Activated CD4-positive, alpha-beta T cell treated with anti-CD3 and anti-CD28 coated beads, Interleukin-2, amount 10 ng/mL, durations not matched to agents 7 days and 5 days (primary cell): ENCODE measurements at regions of chr6 and their contacts with region 1.

Region 1: DNA sequence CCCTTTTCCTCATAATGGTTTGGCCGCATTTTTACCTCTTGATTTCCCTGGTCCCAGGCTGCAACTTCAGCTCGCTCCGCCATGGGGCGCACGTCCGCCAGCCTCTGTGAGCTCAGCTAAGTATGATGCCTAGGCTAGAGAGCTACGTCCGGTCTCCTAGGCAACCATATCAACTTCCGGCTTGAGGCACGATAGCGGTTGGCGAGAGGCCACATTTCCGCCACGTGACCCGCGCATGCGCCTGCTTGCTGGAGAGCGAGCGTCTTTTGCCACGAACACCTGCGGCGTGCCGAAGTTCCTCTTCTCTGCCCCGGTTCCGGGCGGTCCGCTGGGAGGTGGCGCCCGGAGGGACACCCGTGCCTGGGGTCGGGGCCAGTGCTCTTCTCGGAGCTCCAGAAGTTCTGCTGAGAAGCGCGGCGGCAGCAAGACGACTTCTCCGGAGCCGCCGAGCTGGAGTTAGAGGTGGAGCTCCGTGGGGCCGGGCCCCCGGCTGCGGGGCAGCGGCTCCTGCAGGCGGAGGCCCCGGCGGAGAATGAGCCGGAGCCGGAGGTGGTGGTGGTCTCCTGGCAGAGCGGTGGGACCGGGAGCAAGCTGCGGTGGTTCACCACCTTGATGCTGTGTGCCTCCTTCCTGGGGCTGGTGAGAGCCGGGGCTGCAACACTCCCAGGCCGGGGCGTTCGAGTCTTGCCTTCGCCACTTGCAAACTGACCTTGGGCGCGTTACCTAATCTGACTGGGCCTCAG is 172.0 kb downstream of the SLC16A10 start:
- DNase-seq: peak; percentile 99
- H3K4me3 Mint-ChIP-seq: peak overlapping the region; percentile 68
- H3K27ac Mint-ChIP-seq: peak overlapping the region; percentile 87
- H3K4me1 Mint-ChIP-seq: peaks cover 33% of the 10 kb centered on the region
- H3K27me3 Mint-ChIP-seq: peaks cover 4% of the 10 kb centered on the region

Region 2: DNA sequence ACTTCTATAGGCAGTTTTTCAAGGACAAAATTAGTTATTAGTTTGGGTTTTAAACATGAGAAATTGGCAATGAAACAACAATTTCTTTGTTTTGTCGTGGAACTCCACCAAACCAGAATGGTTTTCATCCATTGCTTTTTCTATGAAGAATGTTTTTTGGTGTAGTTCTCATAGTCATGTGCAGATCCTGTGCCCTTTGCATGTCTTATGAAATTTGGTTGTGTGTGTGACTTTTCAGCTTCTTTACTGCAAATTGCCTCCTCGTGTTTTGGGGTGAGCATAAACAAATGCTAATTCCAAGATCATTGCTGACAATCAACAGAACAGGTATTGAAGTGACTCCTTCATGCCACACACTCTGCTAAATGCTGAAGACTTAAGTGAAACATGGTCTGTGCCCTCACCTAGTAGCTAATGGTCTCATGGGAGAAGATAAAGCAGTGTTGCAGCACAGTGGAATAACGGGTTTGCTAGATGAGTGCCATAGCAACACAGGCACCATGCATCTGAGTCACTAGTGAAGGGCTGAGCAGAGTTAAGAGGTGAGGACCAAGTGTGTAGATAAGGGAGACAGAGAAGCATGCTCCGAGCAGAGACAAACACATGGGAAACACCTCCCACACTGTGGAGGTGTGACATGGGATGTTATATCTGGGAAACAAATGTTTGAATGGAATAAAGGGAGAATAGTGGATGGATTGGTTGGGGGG is 52.0 kb before region 1 on chr6:
- CTCF ChIA-PET with region 1: no interaction called
- POLR2A ChIA-PET with region 1: no interaction called
- DNase-seq: no peak
- H3K4me3 Mint-ChIP-seq: no peak overlapping the region
- H3K27ac Mint-ChIP-seq: no peak overlapping the region
- H3K4me1 Mint-ChIP-seq: no peaks in the 10 kb centered on the region
- H3K27me3 Mint-ChIP-seq: no peaks in the 10 kb centered on the region

Region 3: DNA sequence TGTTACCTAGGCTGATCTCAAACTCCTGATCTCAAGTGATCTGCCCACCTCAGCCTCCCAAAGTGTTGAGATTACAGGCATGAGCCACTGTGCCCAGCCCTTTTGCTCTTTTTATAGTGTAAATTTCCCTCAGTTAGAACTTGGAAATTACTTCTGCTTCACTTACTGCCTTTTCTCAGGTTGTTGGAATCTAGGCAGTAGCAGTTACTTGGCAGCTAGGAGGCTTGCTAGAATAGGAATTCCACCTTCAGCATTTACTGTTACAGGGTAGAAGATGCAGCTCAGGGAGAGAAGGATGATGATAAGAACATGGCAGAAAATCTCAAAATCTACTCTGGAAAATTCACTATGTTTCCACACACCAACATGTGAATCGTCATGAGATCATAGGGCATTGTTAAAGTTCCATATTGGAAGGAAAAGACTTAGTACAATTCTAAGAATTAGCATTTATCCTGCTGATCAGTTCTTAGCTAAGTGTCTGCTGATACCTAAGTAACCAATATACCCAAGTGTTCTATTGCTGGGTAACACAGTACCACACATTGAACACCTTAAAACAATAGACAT is 10.2 kb after region 1 on chr6:
- CTCF ChIA-PET with region 1: interaction called, 17 read pairs
- POLR2A ChIA-PET with region 1: no interaction called
- DNase-seq: no peak
- H3K4me3 Mint-ChIP-seq: no peak overlapping the region
- H3K27ac Mint-ChIP-seq: no peak overlapping the region
- H3K4me1 Mint-ChIP-seq: peaks cover 6% of the 10 kb centered on the region
- H3K27me3 Mint-ChIP-seq: no peaks in the 10 kb centered on the region

Region 4: DNA sequence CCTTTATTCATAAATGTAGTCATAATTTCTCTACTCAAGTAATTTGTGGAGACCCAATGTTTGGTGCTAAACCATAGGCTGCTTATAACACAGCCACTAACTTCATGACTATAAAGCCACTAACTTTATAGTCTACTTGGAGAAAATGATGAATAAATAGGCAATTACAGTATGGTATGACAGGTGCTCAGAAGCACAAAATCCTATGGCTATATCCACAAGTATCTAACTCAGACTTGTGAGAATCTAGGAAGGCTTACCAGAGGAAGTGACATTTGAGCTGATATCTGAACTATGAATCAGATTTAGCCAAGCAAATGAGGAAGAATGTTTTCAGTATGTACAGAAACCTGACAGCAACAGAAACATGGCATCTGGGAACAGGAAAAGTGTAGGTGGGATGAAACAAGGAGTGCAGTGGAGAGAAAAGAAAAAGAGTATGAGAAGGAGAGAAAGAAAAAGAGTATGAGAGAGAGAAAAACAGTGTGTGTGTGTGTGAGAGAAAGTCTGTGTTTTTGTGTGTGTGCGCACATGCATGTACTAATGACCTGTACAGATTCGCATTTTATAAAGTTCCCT is 163.9 kb after region 1 on chr6:
- CTCF ChIA-PET with region 1: no interaction called
- POLR2A ChIA-PET with region 1: no interaction called
- DNase-seq: no peak
- H3K4me3 Mint-ChIP-seq: no peak overlapping the region
- H3K27ac Mint-ChIP-seq: no peak overlapping the region
- H3K4me1 Mint-ChIP-seq: peaks cover 24% of the 10 kb centered on the region
- H3K27me3 Mint-ChIP-seq: no peaks in the 10 kb centered on the region

Region 5: DNA sequence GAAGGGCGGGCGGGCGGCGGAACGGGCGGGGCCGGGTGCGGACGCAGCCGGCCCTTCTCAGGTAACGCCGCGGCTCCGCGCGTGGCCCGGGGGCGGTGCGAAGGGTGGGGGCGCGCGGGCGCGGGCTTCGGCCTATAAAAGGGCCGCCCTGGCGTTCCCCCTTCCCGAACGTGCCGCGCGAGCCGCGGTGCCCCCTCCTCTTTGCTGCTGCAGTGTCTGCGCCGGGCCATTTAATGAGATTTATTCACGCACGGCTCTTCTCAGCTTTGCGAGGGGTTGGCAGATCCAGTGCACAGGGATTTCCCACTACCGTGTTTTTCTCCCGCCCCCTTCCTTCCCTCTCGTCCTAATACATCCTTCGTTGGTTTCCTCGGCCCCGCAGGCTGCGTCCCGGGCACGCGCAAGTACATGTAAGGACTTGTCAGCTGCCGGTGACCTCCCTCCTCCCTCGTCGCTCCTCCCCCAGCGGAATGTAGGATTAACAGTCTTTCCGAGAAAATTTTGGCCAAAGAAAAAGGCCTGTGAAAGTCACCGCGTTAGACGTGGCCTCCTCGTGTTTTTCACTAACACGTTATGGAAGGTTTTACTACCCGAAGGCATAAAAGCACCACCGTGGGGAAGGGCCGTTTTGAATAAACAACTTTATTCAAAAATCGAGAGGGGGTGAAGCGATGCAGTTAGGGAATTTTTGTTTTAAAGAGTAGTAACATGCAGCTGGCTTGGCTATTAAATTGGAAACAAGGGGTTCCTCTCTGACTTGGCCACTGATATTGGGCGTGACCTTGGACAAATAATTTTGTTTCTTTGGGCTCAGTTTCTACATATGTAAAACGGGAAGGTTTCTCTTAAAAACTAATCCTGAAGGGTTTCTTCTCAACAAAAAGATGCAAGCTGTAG is 224.7 kb after region 1 on chr6:
- CTCF ChIA-PET with region 1: interaction called, 27 read pairs
- POLR2A ChIA-PET with region 1: interaction called, 4 read pairs
- DNase-seq: peak; percentile 87
- H3K4me3 Mint-ChIP-seq: peak overlapping the region; percentile 97
- H3K27ac Mint-ChIP-seq: peak overlapping the region; percentile 98
- H3K4me1 Mint-ChIP-seq: peaks cover 58% of the 10 kb centered on the region
- H3K27me3 Mint-ChIP-seq: no peaks in the 10 kb centered on the region

Region 6: GRCh38 chr6:111644893-111645429 is 385.7 kb after region 1 on chr6:
- CTCF ChIA-PET with region 1: interaction called, 10 read pairs
- POLR2A ChIA-PET with region 1: no interaction called
- DNase-seq: no peak
- H3K4me3 Mint-ChIP-seq: no peak overlapping the region
- H3K27ac Mint-ChIP-seq: no peak overlapping the region
- H3K4me1 Mint-ChIP-seq: peaks cover 3% of the 10 kb centered on the region
- H3K27me3 Mint-ChIP-seq: no peaks in the 10 kb centered on the region